ENCODE measurements at regions of chr1 and their contacts with region 1.

Region 1: DNA sequence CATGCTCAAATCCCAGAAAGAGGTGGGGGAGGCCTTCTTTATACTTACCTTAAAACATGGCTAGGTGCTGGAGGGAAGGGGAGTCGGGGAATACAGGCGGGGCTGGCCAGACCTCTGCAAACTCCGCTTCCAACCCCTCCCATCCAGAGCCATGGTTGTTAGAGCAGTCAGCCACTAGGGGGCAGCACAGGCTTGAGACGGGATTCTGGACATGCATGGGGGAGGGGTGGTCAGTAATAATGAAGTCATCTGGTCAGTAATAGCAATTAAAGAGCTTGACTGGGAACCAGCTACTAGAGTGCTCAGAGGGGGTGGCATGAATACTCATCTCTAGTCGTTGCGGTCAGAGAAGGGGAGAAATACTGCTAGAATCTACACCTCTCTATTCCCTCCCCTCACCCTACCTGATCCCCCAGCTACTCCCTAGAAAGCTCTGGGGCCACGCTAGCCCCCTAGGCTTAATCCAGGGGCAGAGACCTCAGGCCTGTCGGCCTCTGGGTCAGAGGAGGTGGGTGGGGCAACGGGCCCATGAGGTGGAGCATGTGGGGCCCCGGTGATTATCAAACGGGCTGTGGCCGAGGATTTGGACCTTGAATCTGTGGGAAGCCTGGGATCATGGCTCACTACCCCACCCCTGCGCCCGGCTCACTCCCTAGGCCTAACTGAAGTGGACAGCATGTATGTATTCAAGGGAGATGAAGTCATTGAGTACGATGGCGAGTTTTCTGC is 2.9 kb downstream of the CASQ1 start:
- DNase-seq: peak; percentile 54 to 78
- H3K4me3 ChIP-seq: no peak overlapping the region
- H3K27ac ChIP-seq: no peak overlapping the region
- H3K4me1 ChIP-seq: no peaks in the 10 kb centered on the region
- H3K27me3 ChIP-seq: no peaks in the 10 kb centered on the region
- CTCF ChIP-seq: peak; percentile 96

Region 2: DNA sequence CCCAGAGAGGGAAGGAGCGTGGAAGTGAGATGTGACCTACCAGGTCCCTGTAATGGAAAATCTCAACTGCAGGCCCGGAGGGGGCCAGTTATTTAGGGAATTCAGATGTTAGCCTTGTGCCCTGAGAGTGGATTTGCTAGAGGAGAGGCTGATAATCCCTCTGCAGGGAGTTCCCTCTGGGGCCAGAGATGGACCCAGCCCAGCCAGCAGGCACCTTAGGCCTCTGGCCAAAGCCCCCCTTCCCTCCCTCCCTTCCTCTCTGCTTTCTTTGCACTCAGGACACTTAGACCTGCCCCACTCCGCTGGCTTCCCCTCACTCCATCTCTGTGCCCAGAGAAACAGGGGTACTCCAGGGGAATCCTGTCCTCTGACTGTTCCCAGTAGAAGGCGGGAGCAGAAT is 79.2 kb before region 1 on chr1:
- CTCF ChIA-PET with region 1: interaction called, 3 read pairs
- POLR2A ChIA-PET with region 1: no interaction called
- intact Hi-C with region 1: loop called (anchors 1 kb)
- DNase-seq: no peak
- H3K4me3 ChIP-seq: no peak overlapping the region
- H3K27ac ChIP-seq: no peak overlapping the region
- H3K4me1 ChIP-seq: peaks cover 17% of the 10 kb centered on the region
- H3K27me3 ChIP-seq: no peaks in the 10 kb centered on the region
- CTCF ChIP-seq: no peak

Region 3: DNA sequence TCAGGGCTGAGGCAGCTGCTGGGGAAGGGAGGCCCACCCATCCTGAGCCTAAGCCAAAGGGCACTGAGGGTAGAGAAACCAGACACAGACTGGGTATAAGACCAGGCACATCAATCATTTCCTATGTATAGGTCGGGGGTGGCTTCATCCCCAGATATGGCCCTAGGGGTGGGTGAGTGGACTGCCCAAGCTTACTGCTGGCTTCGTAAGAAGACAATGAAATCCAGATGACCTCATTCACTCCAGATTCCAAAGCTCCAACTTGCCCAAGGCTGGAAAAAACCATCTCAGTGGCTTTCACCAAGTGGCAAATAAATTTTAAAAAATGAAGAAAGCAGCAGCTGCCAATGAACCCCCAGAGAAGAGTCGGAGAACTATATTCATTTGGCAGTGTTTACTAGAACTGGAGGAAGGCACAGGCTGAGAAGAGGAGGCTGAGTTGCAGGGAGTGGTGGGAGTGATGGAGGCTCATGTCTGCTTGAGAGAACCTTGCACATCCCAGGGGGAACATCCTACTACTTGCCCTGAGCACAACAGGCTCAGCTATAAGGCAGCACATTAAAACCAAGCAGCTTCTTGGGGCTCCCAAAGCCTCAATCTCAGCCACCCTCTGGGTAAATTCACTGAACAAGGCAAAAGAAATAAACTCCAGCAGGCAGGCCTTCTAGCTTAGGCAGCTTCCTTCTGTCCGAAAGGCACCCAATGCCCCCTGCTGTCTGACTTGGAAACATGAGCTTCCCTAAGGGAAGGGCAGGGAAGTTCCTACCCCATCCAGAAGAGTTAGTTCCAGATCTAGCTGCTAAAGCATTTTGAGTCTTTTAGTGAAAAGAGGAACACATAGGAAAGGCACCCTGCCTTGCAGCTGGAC is 26.0 kb after region 1 on chr1:
- CTCF ChIA-PET with region 1: interaction called, 51 read pairs
- POLR2A ChIA-PET with region 1: no interaction called
- intact Hi-C with region 1: loop called (anchors 2 kb)
- DNase-seq: peak in 1 of 2 experiments; percentile 39
- H3K4me3 ChIP-seq: no peak overlapping the region
- H3K27ac ChIP-seq: no peak overlapping the region
- H3K4me1 ChIP-seq: 0 out of 2 replicates have a peak, but pooled peaks cover 4% of the 10 kb centered on the region
- H3K27me3 ChIP-seq: no peaks in the 10 kb centered on the region
- CTCF ChIP-seq: peak; percentile 65

Region 4: DNA sequence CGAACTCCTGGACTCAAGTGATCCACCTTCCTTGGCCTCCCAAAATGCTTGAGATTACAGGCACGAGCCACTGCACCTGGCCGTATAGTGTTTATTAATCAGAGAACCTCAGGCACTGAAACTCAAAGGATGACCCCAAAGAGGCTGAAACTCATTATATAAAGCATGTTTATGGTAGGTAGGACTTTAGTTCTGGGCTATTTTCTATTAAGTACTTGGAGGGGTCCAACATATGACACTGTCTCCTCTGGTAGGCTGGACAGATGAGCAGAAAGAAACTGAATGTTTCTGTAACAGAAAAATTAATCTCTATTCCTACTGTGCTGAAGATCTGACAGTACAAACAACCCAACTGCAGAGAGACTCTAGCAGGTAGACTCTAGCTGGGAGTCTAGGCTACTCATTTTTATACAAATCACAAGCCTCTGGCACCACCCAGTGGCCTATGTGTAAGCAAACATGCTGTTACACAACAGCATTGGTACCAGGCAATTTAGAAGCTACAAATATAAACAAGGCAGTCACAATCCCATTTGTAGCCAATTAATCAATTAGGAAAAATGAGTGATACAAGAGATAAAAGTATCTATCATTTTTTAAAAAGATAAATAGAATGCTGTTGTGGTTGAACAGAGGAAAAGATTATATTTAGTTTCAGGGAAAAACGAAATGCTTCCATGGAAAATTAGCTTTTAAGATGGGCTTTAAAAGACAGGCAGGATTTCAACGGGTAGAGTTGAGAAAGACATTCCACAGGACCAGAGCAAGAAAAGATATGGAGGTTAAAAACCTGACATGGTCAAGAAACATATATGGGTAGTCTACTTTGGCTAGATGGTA is 58.7 kb after region 1 on chr1:
- CTCF ChIA-PET with region 1: interaction called, 15 read pairs
- POLR2A ChIA-PET with region 1: interaction called, 5 read pairs
- intact Hi-C with region 1: no loop called
- DNase-seq: peak; percentile 33 to 71
- H3K4me3 ChIP-seq: no peak overlapping the region
- H3K27ac ChIP-seq: no peak overlapping the region
- H3K4me1 ChIP-seq: peaks cover 9% of the 10 kb centered on the region
- H3K27me3 ChIP-seq: no peaks in the 10 kb centered on the region
- CTCF ChIP-seq: peak; percentile 81

Region 5: DNA sequence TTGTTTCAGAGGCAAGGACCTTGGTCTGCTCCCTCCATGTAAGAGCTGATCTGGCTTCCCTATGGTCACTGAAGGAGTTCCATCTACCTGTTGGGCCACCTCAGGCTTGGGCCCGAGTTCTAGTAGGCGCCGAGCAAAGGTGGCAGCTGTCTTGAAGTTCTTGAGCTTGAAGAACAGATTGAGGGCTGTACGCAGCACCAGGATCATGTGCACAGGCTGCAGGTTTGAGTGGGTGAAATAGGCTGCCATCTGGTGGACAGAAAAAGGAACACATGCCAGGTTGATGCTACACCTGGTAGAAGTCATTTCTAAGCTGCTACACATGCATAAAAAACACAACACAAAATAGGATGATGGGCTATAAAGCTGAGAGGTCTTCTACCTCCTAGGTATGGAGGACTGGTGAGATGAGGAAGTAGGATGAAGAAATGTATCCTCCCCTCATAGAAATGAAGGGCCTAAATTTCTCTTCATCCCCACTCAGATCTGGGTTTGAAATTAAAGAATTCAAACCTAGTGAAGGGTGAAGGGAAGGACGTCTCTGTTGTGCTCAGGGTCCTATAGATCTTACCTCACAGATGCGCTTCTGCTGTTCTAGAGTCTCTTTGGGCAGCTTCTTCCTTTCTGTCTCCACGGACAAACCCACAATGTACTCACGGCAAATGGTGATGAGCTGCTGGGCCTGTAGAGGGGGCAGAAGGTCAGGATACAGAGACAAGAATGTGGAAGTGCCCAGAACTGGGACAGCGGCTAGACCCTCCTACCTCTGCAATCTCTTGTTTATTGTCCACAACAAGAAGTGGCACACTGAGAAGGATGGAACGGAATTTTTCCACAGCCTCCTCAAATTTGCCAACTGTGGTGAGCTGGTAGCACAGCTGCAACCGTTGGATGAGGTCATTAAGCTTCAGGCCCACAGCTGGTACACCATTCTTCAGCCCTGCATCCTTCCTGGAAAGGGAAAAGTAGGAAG is 98.3 kb after region 1 on chr1:
- CTCF ChIA-PET with region 1: interaction called, 24 read pairs
- POLR2A ChIA-PET with region 1: no interaction called
- intact Hi-C with region 1: loop called (anchors 1 kb)
- DNase-seq: peak; percentile 43 to 58
- H3K4me3 ChIP-seq: no peak overlapping the region
- H3K27ac ChIP-seq: no peak overlapping the region
- H3K4me1 ChIP-seq: peaks cover 6% of the 10 kb centered on the region
- H3K27me3 ChIP-seq: no peaks in the 10 kb centered on the region
- CTCF ChIP-seq: peak; percentile 86

Region 6: DNA sequence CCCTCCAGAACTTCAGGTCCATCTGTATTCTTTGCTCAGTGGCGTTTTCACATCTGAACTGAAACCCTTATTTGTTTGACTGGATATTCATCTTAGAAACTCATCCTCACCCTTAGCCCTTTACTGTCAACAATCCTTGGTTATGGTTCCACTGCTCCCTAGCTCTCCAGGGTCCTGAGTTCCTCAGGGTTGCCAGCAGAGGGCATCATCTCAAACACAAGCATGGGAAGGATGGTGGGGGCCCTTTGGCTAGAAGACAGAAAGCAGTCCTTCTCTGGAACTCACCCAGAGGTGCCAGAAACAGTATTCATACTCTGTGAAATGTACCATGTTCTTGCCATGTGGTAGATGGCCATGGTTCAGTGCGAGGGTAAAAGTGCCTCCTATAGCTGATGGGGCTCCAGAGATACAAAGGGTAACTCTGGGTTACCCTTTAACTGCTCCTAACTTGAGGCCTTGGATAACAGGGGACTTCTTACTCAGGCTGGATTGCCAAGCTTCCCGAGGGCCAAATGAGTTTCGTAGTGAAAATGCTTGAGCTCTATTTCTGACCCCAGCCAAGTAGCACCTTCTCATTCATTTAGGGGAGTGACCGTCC is 161.2 kb after region 1 on chr1:
- CTCF ChIA-PET with region 1: no interaction called
- POLR2A ChIA-PET with region 1: no interaction called
- intact Hi-C with region 1: no loop called
- DNase-seq: peak in 1 of 2 experiments; percentile 25
- H3K4me3 ChIP-seq: no peak overlapping the region
- H3K27ac ChIP-seq: no peak overlapping the region
- H3K4me1 ChIP-seq: no peaks in the 10 kb centered on the region
- H3K27me3 ChIP-seq: no peaks in the 10 kb centered on the region
- CTCF ChIP-seq: peak; percentile 58; the same call in 1 of the 2 replicates

Region 7: DNA sequence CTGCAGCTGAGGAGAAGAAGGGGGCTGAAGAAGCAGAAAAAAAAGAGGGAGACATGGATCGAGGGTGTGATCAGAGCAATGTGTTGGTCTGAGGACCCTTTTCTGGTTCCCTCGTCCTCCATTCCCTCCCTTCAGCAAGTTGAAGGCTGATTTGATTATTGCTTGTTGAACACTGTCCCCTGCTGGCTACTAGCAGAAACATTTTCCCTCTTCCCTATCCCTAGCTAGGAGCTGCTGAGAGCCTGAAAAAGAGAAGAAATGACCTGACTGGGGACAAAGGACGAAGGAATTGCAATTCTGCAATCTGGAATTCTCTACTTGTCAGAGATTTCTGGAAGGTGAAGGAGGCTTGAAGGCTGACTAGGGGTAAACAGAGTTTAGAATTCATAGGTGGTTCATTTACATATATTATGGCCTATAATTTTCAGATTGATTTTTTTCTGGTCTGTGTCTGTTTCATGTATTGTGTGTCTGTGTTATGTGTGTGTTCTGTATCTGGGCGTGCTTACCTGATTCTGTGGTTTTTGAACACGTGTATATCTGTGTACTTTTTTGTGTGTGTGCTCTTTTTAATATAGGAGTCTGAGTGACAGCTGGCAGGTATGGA is 183.4 kb after region 1 on chr1:
- CTCF ChIA-PET with region 1: no interaction called
- POLR2A ChIA-PET with region 1: no interaction called
- intact Hi-C with region 1: loop called (anchors 1 kb)
- DNase-seq: peak; percentile 20 to 60
- H3K4me3 ChIP-seq: no peak overlapping the region
- H3K27ac ChIP-seq: no peak overlapping the region
- H3K4me1 ChIP-seq: peaks cover 10% of the 10 kb centered on the region
- H3K27me3 ChIP-seq: no peaks in the 10 kb centered on the region
- CTCF ChIP-seq: peak; percentile 87

Region 8: GRCh38 chr1:160416369-160416768 is 223.1 kb after region 1 on chr1:
- CTCF ChIA-PET with region 1: no interaction called
- POLR2A ChIA-PET with region 1: no interaction called
- intact Hi-C with region 1: loop called (anchors 1 kb)
- DNase-seq: peak in 1 of 2 experiments; percentile 57
- H3K4me3 ChIP-seq: no peak overlapping the region
- H3K27ac ChIP-seq: no peak overlapping the region
- H3K4me1 ChIP-seq: no peaks in the 10 kb centered on the region
- H3K27me3 ChIP-seq: 0 out of 2 replicates have a peak, but pooled peaks cover 5% of the 10 kb centered on the region
- CTCF ChIP-seq: peak; percentile 65

Region 9: GRCh38 chr1:160567858-160568682 is 374.8 kb after region 1 on chr1:
- CTCF ChIA-PET with region 1: no interaction called
- POLR2A ChIA-PET with region 1: no interaction called
- intact Hi-C with region 1: no loop called
- DNase-seq: no peak
- H3K4me3 ChIP-seq: no peak overlapping the region
- H3K27ac ChIP-seq: no peak overlapping the region
- H3K4me1 ChIP-seq: no peaks in the 10 kb centered on the region
- H3K27me3 ChIP-seq: peaks cover 60% of the 10 kb centered on the region
- CTCF ChIP-seq: no peak

Region 10: DNA sequence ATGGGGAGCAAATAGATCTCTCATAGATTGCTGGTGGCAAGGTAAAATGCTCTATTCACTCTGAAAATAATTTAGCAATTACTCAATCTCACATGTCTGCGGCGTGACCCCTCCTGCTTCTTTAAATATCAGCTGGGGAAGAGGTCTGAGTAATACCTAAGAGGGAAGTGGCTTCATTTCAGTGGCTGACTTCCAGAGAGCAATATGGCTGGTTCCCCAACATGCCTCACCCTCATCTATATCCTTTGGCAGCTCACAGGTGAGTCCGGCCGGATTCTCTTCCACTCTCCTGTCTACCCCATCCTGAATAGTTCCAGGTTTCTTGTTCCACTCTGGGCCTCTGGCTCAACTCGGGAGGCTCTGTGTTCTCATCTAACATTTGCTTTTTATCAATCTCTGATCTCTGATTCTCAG is 545.9 kb after region 1 on chr1 and contains the start of gene SLAMF7:
- CTCF ChIA-PET with region 1: no interaction called
- POLR2A ChIA-PET with region 1: no interaction called
- intact Hi-C with region 1: no loop called
- DNase-seq: peak; percentile 39 to 44
- H3K4me3 ChIP-seq: no peak within 1 kb of the TSS
- H3K27ac ChIP-seq: no peak within 1 kb of the TSS
- H3K4me1 ChIP-seq: no peaks in the 10 kb centered on the region
- H3K27me3 ChIP-seq: no peaks in the 10 kb centered on the region
- CTCF ChIP-seq: no peak
- total RNA-seq, gene SLAMF7: 1.7 and 3.6 TPM in 2 replicates

Measured in PC-9 (cell line).